GM12878 (cell line): ENCODE measurements at regions of chr10 and their contacts with region 1.

Region 1: GRCh38 chr10:103373544-103373943 is 5.8 kb downstream of the TAF5 start:
- DNase-seq: no peak
- ATAC-seq: peak; percentile 57
- H3K4me3 ChIP-seq: peak overlapping the region; percentile 22; the same call in 1 of the 2 replicates
- H3K27ac ChIP-seq: peak overlapping the region; percentile 71
- H3K4me1 ChIP-seq: peaks cover 20% of the 10 kb centered on the region
- H3K27me3 ChIP-seq: no peaks in the 10 kb centered on the region
- CTCF ChIP-seq: no peak
- EP300 ChIP-seq: no peak
- POLR2A ChIP-seq: no peak
- RAD21 ChIP-seq: no peak

Region 2: DNA sequence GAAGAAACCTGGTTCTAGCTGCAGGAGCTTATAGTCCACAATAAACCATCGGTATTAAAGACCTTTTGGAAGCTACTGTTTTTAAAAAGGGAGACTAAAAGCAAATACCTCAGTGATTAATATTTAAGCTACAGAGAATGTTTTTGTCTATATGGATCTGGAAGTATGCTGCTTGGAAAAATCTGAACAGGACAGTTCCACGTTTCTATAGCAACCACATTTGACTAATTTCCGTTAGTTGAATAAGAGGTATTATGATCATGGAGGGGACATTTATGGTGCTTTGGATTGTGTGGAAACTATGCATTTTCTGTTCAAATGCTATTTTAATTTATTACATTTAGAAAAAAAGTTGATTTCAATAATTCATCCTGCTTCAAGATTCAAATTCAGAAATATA is 14.6 kb after region 1 on chr10:
- CTCF ChIA-PET with region 1: interaction called, 4 read pairs
- POLR2A ChIA-PET with region 1: interaction called, 4 read pairs
- RAD21 ChIA-PET with region 1: interaction called, 3 read pairs
- SMC1A ChIA-PET with region 1: interaction called, 10 read pairs
- in situ Hi-C with region 1: no loop called
- intact Hi-C with region 1: no loop called
- DNase-seq: no peak
- ATAC-seq: no peak
- H3K4me3 ChIP-seq: no peak overlapping the region
- H3K27ac ChIP-seq: no peak overlapping the region
- H3K4me1 ChIP-seq: no peaks in the 10 kb centered on the region
- H3K27me3 ChIP-seq: no peaks in the 10 kb centered on the region
- CTCF ChIP-seq: no peak
- EP300 ChIP-seq: no peak
- POLR2A ChIP-seq: no peak
- RAD21 ChIP-seq: no peak